Dendritic cell treated with granulocyte-macrophage colony-stimulating factor and Interleukin-4, amounts not matched to agents 40 ng/mL and 50 ng/mL, for 4 days (primary cell): ENCODE measurements at regions of chr2 and their contacts with region 1.

Region 1: GRCh38 chr2:112708968-112709367 is 11.9 kb upstream of the NT5DC4 start:
- H3K4me3 Mint-ChIP-seq: no peak overlapping the region
- H3K27ac Mint-ChIP-seq: peak overlapping the region; percentile 86
- H3K4me1 Mint-ChIP-seq: peaks cover 89% of the 10 kb centered on the region
- H3K27me3 Mint-ChIP-seq: no peaks in the 10 kb centered on the region

Region 2: DNA sequence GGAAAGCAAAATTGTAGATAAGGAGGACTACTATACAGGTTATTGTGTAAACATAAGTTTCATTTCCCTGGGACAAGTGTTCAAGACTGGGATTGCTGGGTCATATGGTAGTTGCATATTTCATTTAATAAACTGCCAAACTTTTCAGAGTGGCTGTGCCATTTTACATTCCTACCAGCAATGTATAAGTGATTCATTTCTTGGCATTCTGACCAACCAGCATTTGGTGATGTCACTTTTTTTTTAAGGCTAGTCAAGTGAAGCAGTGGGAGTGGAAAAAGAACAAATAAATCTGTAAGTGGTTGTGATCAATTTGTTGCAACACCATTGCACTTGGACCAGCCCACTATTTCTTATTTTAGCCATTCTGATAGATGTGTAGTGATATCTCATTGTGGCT is 129.7 kb before region 1 on chr2:
- intact Hi-C with region 1: no loop called
- H3K4me3 Mint-ChIP-seq: no peak overlapping the region
- H3K27ac Mint-ChIP-seq: no peak overlapping the region
- H3K4me1 Mint-ChIP-seq: peaks cover 18% of the 10 kb centered on the region
- H3K27me3 Mint-ChIP-seq: no peaks in the 10 kb centered on the region

Region 3: GRCh38 chr2:112674229-112674628 is 34.7 kb before region 1 on chr2:
- intact Hi-C with region 1: loop called (anchors 1 kb)
- H3K4me3 Mint-ChIP-seq: peak overlapping the region; percentile 69
- H3K27ac Mint-ChIP-seq: peak overlapping the region; percentile 78
- H3K4me1 Mint-ChIP-seq: peaks cover 18% of the 10 kb centered on the region
- H3K27me3 Mint-ChIP-seq: no peaks in the 10 kb centered on the region

Region 4: DNA sequence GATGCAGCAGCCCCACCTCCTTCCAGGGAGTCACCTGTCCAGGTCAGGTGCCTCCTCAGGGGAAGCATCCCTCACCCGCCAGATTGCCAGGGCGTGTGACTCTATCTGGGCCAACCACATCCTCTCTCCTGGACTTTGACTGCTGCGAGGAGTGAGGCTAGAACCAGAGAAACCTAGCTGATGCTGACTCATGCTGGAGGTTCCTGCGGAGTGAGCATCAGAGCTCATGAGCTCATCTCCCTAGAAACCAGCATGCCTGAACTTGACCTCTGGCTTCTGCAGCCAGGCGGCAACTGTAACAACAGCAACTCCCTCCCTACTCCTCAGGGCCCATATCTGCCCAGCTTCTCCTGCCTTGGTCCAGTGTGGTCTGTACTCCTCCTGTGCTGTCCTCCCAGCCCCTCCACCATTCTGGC is 16.5 kb before region 1 on chr2:
- intact Hi-C with region 1: loop called (anchors 2 kb)
- H3K4me3 Mint-ChIP-seq: peak overlapping the region; percentile 48
- H3K27ac Mint-ChIP-seq: peak overlapping the region; percentile 93
- H3K4me1 Mint-ChIP-seq: peaks cover 64% of the 10 kb centered on the region
- H3K27me3 Mint-ChIP-seq: no peaks in the 10 kb centered on the region